Uterus (tissue), 4 donors: ENCODE measurements at regions of chr2 and their contacts with region 1.

Region 1: DNA sequence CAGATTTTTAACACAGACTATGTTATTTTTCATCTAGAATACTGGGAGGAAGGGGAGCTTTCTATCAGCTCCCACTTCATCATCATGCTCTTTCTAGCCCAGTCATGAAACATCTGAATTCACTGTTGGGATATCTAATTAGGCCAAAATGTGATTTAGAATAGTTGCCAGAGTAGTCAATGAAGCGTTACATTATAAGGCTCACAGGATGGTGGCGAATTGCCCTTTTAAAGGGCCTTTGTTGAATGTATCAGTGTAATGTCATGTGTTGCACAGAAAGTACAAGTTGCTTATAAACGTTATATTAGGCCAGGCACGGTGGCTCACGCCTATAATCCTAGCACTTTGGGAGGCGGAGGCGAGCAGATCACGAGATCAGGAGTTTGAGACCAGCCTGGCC is 45.6 kb downstream of the PDE1A start:
- DNase-seq: no peak
- H3K4me3 ChIP-seq: no peak overlapping the region
- H3K27ac ChIP-seq: no peak overlapping the region
- H3K4me1 ChIP-seq: peaks cover 0 to 3% of the 10 kb centered on the region in 2 donors
- H3K27me3 ChIP-seq: no peaks in the 10 kb centered on the region
- CTCF ChIP-seq: no peak
- POLR2A ChIP-seq: no peak

Region 2: GRCh38 chr2:182573553-182573952 is 192.3 kb after region 1 on chr2:
- intact Hi-C with region 1: loop called (anchors 5 kb)
- DNase-seq: no peak
- H3K4me3 ChIP-seq: no peak overlapping the region
- H3K27ac ChIP-seq: no peak overlapping the region
- H3K4me1 ChIP-seq: no peaks in the 10 kb centered on the region
- H3K27me3 ChIP-seq: no peaks in the 10 kb centered on the region
- CTCF ChIP-seq: no peak
- POLR2A ChIP-seq: no peak